Heart left ventricle (tissue), 16 donors: ENCODE measurements at regions of chr4 and their contacts with region 1.

Region 1: GRCh38 chr4:112109186-112110058 is 35.8 kb upstream of the FAM241A start:
- DNase-seq: no peak
- ATAC-seq: peak; percentile 37 to 85 (median 60)
- H3K4me3 ChIP-seq: peak overlapping the region in 1 of 12 donors; percentile 5
- H3K27ac ChIP-seq: peak overlapping the region in 10 of 12 donors; percentile 2 to 74 (median 54)
- H3K4me1 ChIP-seq: peaks cover 0 to 27% (median 2%) of the 10 kb centered on the region in 12 donors
- H3K27me3 ChIP-seq: no peaks in the 10 kb centered on the region
- CTCF ChIP-seq: no peak
- POLR2A ChIP-seq: no peak

Region 2: DNA sequence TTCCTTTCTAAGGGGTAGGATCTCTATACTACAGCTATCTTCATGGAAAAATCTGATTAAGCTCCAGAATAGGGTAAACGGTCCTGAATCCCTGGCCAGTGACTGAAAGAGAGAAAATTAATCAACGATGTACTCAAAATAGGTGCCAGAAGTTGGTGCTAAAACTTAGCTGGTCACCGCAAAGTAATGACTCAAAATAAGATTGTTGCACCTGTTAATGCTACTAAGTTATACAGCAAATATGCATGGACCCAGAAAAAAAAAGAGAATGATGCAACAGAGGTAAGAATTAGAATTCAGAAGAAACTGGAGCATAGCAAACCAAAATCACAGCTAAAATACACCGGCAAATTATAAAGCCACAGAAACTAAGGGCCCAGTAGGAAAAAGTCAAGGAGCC is 203.9 kb before region 1 on chr4:
- intact Hi-C with region 1: no loop called
- DNase-seq: no peak
- ATAC-seq: no peak
- H3K4me3 ChIP-seq: no peak overlapping the region
- H3K27ac ChIP-seq: no peak overlapping the region
- H3K4me1 ChIP-seq: no peaks in the 10 kb centered on the region
- H3K27me3 ChIP-seq: no peaks in the 10 kb centered on the region
- CTCF ChIP-seq: no peak
- POLR2A ChIP-seq: no peak

Region 3: GRCh38 chr4:112145326-112145819 is 36.0 kb after region 1 on chr4 and contains the start of gene FAM241A:
- intact Hi-C with region 1: loop called in 4 of 10 experiments (anchors 2 to 5 kb)
- DNase-seq: peak; percentile 90 to 96 (median 92)
- ATAC-seq: peak; percentile 98 to 99 (median 98)
- H3K4me3 ChIP-seq: peak within 1 kb of the TSS; percentile 74 to 94 (median 84)
- H3K27ac ChIP-seq: peak within 1 kb of the TSS; percentile 79 to 96 (median 90)
- H3K4me1 ChIP-seq: peaks cover 5 to 65% (median 43%) of the 10 kb centered on the region in 12 donors
- H3K27me3 ChIP-seq: no peaks in the 10 kb centered on the region
- CTCF ChIP-seq: peak in 1 of 12 donors; percentile 4
- POLR2A ChIP-seq: peak; percentile 53 to 98
- total RNA-seq, gene FAM241A: 5.4 to 10.3 (median 8.5) TPM

Region 4: DNA sequence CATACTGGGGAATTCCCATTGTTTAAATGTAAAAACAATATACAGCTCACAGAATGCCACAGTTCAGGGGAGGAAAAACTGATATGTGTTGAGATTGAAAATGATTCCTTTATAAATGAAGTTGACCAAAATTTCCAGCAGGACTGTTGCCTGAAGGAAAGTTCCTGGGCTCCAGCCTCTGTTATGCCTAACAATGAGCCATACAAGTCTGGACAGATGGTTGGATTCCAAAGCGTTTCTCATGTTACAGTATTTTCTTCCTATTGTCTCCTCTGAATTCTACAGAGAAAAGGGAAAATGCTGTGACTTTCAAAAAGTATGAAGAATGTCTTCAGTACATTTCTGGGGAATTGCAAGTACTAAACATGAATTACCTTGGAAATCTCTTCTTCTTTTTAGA is 261.0 kb after region 1 on chr4:
- intact Hi-C with region 1: no loop called
- DNase-seq: no peak
- ATAC-seq: no peak
- H3K4me3 ChIP-seq: no peak overlapping the region
- H3K27ac ChIP-seq: no peak overlapping the region
- H3K4me1 ChIP-seq: no peaks in the 10 kb centered on the region
- H3K27me3 ChIP-seq: no peaks in the 10 kb centered on the region
- CTCF ChIP-seq: no peak
- POLR2A ChIP-seq: no peak